Head of caudate nucleus (tissue), 42 donors: ENCODE measurements at regions of chr11 and their contacts with region 1.

Region 1: GRCh38 chr11:118401151-118401878 is at the start of gene ATP5MG:
- DNase-seq: peak; percentile 84 to 96 (median 91)

Region 2: DNA sequence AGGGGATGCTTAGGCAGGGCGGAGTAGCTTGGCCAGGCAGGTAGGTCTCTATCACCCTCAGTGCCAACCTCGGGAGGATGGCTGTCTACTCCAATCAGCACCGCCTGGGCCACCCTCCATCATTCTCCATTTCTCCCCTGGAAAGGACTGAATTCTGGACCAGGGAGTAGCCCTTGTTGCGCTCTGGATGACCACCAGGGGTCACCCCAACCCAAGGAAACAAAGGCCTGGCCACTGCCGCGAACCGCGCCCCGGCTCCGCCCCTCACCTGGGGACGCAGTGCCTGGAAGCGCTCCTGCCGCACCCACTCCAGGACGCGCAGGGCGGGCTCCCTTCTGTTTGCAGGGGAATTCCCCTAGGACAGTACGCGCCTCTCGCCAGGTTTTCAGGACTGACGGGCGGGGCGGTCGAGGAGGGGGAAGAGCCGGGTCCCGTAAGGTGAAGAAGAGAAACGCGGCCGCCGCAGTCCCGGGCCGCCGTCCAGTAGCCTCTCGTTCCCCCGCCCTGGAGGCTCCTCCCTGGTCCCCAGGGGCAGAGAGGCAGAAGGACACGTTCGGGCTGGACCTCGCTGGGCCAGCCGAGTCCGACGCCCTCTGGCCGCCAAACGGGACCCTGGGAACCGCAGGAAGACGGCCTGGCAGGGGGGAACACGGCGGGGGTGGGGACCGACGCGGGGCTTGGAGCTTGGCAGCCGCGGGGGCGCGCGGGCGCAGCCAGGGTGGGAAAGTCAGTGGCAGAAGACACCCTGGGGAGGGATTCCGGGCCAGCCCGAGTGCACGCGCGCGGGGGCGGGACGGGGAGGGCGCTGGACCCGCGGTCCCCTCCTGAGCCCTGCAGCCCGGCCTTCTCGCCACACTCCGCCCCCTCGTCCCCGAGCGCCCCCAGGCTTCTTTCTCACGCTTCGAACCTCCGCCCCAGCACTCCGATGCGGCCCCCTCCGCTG is 255.8 kb before region 1 on chr11:
- intact Hi-C with region 1: no loop called
- DNase-seq: peak; percentile 67 to 93 (median 84)

Region 3: GRCh38 chr11:118277306-118277705 is 124.0 kb before region 1 on chr11:
- intact Hi-C with region 1: no loop called
- DNase-seq: no peak

Region 4: DNA sequence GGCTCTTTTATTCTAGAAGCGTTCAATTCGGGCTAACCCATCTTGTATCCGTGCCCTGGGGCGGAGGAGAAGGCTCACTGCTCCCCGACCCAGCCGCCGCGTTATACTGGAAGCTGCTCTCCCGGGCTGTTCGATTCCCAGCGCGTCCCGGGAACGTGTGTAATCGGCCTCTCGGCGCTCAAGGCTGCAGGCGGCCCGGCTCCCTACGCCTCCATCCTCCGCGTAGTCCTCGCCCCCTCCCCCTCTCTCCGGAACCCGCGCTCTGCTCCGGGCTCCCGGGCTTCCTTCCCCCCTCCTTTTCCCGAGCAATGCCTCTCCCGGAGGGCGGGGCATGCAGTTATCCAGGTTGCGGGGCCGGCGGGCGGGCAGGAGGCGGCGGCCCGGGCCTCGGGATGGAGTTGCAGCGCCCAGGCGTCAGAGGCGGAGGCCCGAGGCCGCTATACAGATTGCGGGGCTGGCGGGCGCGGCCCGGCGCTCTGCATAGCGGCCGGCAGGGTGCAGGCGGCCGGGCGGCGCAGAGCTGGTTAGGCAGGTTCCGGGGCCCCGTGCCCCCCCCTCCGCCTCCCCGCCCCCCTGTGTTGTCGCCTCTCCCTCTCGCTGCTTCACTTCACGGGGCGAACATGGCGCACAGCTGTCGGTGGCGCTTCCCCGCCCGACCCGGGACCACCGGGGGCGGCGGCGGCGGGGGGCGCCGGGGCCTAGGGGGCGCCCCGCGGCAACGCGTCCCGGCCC is 34.7 kb after region 1 on chr11 and contains the start of gene KMT2A:
- intact Hi-C with region 1: loop called (anchors 5 kb)
- DNase-seq: peak; percentile 88 to 99 (median 98)

Region 5: GRCh38 chr11:118488480-118489109 is 87.3 kb after region 1 on chr11:
- intact Hi-C with region 1: loop called (anchors 5 kb)
- DNase-seq: peak; percentile 22 to 87 (median 66)